ENCODE measurements at regions of chr7 and their contacts with region 1.

Region 1: DNA sequence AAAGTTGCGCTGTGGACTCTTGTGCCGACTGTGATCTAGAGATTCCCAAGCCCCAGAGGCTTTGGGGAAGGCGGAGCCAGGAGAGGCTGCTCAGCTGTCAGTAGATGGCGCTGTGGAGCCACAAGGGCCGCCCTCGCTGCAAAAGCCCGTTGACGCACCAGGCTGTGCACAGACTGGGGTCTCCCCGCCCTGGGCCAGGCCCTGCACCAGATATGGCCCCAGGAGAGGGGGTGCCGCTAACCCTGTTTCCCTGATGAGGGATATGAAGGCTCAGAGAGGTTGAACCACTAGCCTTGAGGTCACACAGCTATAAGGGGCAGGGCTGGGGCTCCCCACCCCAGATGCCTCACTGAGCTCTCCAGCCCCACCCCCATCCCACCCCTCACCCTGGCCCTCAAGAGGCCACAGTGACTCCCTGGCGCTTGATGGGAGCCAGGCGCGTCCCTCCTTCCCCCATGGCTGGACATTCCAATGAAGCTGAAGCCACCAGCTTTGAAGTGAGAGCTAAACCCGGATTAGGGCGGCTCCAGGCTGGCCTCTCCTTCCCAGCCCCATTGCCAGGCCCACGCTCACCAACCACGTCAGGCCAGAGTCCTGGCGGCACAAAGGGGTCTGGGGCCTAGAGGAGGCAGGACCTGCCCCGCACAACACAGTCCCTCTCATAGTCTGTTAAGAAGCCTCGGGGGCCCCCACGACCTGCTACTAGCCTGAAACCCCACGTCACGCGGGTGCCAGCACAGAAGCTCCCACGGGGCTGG is 26.4 kb downstream of the MYL10 start:
- DNase-seq: no peak
- H3K4me3 ChIP-seq: no peak overlapping the region
- CTCF ChIP-seq: peak; percentile 95

Region 2: DNA sequence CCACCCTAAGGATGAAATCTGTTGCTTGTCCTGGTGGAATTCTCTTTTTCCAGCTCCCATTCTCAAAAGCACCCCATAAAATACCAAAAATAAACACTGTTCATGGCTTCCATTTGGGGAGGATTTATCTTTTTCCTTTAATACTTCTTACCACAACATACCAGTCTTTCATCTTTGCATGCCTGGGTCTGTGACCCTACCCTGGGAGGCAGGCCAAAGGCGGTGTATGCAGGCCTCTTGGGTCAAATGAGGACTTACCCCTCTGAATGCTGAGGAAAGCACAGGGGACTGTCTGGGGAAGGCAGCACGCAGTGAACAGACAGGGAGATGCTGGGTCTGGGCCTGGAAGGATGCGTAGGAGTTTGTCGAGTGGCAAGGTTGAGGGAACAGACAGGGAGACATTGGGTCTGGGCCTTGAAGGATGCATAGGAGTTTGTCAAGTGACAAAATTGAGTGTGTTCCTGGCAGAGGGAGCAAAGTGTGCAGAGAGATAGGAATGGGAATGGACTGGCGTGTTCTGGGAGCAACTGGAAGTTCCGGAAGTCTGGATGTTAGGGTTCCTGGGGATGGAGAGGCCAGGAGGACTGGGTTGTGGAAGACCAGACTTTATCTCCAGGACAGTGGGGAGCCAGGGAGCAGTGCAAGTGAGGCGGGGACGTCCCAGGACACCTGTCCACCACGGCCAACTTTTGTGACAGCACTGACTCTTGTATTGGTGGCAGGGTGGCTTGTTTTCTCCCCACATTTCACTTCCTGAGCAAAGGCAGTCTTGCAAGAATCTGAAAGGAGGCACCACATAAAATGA is 14.3 kb before region 1 on chr7:
- CTCF ChIA-PET with region 1: interaction called, 10 read pairs
- POLR2A ChIA-PET with region 1: no interaction called
- DNase-seq: no peak
- H3K4me3 ChIP-seq: no peak overlapping the region
- CTCF ChIP-seq: no peak

Region 3: GRCh38 chr7:101681170-101682007 is 78.7 kb after region 1 on chr7:
- CTCF ChIA-PET with region 1: interaction called, 13 read pairs
- POLR2A ChIA-PET with region 1: no interaction called
- DNase-seq: peak; percentile 57
- H3K4me3 ChIP-seq: no peak overlapping the region; the same call in 1 of the 2 replicates
- CTCF ChIP-seq: no peak

Region 4: GRCh38 chr7:101696327-101696726 is 93.7 kb after region 1 on chr7:
- CTCF ChIA-PET with region 1: no interaction called
- POLR2A ChIA-PET with region 1: no interaction called
- DNase-seq: no peak
- H3K4me3 ChIP-seq: no peak overlapping the region
- CTCF ChIP-seq: no peak

Region 5: DNA sequence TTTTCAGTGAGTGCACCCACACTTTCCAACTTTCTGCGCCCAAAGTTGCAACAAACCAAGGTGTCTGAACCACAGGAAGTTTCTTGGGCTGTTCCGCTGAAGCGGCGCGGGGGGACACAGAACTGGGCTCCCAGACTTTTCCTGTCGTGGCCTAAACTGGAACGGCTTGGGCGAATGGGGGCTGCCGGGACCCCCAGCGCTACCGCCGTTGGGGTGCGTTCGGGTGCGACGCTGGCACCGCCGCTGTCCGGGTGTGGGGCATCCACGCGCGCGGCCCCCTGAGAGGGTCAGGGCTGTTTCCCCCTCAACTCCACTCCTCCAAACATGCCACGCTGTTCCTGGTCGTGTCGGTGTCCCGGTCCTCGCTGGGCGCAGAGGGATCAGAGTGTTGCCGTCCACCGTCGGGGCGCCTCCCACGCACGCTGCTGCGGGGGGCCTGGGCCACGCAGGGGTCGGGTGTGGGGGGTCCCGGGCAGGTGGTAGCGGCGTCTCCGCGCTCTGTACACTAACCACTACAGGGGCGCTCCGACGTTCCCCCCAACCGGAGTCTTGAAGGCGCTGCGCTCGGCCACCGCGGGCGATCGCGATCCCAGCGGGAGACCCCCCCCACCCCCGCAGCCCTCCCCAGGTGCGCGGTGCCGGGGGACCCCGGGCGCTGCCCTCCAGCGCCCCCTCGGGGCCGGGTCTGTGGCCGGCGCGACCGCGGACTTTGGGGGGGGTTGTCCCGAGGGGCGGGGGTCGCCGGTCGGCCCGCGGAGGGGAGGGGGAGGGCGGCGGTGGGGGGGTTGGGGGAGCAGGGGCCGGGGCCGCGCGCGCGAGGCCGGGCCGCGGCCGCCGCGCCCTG is 212.6 kb after region 1 on chr7:
- CTCF ChIA-PET with region 1: interaction called, 17 read pairs
- POLR2A ChIA-PET with region 1: no interaction called
- DNase-seq: no peak
- H3K4me3 ChIP-seq: peak overlapping the region; percentile 71
- CTCF ChIP-seq: peak; percentile 55

Region 6: GRCh38 chr7:102272075-102272917 is 669.6 kb after region 1 on chr7:
- CTCF ChIA-PET with region 1: interaction called, 26 read pairs
- POLR2A ChIA-PET with region 1: no interaction called
- DNase-seq: peak; percentile 19
- H3K4me3 ChIP-seq: no peak overlapping the region
- CTCF ChIP-seq: peak; percentile 88